Mucosa of descending colon (tissue), 3 donors: ENCODE measurements at regions of chr1 and their contacts with region 1.

Region 1: DNA sequence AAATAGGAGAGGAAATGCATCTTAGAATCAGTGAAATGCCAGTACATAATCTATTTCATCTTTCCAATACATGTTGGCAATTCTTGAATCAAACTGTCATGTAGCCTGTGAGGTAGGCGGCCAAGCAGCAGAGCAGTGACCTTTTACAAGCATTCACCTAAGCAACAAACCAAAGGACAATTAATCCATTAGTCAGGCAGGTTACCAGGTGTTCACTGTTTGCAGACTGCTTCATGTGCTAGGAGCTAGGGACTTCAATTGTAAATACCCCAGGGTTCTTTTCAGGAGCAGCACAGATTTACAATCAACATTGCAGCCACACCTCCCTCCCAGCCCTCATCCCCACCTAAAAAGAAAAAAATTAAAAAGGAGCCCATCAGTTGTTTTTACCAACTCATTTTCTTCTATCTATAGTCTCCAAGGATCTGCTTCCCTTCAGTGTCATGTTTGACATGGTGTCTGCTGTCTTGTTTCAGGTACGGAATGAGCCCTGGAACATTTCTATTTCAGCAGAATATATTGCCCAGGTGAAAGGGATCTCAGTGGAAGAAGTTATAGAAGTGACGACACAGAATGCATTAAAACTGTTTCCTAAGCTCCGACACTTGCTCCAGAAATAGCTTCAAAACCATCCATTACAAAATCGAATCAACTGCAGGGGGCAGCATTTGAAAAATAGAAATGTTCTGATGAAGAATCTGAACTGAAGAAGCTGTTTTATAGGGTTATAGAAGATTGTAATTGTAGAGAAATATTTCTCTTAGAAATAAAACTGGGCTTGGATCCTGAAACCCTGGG is 23.0 kb downstream of the TATDN3 start:
- DNase-seq: peak in 1 of 3 donors; percentile 85
- ATAC-seq: peak; percentile 36
- H3K4me3 ChIP-seq: no peak overlapping the region
- H3K4me1 ChIP-seq: peaks cover 3% of the 10 kb centered on the region
- CTCF ChIP-seq: no peak

Region 2: DNA sequence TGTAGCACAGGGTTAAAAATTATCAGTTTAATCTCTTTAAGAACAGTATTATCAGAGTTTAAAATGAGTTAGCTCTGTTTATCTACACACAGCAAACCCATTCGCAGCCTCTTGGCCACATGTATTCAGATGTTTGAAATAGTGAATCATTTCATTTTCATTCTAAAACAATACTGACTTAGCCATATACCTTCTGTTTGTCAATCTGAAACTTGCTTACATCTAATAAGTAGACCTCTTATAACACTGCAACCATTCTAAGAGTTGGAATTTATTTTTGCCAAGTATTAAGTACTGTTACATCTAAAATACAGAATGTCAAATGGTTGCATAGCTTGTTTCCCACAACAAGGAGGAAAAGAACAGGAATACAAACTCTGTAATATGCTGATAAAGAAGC is 175.5 kb after region 1 on chr1:
- intact Hi-C with region 1: loop called in 1 of 2 experiments (anchors 10 kb)
- DNase-seq: no peak
- ATAC-seq: no peak
- H3K4me3 ChIP-seq: no peak overlapping the region
- H3K4me1 ChIP-seq: peaks cover 9% of the 10 kb centered on the region
- CTCF ChIP-seq: no peak